Left lung (tissue), 14 donors: ENCODE measurements at regions of chr17 and their contacts with region 1.

Region 1: DNA sequence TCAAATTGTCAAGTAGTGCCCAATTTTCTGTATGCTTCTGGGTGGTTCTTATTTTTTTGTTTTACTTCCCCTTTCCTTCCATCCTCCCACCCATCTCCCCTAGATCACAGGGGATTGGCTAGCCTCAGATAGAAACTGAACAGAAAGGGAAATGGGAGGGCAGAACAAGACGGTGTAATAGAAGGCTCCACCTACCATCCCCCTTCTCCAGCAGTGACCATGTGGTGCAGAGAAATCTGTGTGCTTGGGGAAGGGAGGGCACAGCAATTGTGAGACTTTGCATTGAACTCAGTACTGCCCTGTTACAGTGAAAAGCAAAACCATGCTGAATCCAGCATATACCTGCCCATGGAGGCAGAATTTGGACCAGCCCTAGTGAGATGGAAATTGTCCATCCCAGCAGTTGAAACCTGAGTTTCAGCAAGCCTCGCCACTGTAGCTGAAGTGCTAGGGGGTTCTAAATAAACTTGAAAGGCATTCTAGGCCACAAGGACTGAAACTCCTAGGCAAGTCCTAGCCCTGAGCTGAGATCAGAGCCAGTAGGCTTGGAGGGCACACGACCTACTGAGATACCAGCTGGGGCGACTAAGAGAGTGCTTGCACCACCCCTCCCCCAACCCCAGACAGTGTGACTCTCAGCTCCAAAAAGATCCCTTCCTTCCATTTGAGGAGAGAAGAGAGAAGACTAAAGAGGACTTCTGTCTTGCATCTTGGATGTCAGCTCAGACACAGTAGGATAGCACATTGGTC is 5.2 kb downstream of the SLFN11 start:
- DNase-seq: peak in 1 of 4 donors; percentile 43
- ATAC-seq: peak; percentile 94
- H3K4me3 ChIP-seq: no peak overlapping the region
- H3K27ac ChIP-seq: no peak overlapping the region
- H3K4me1 ChIP-seq: peaks cover 0 to 60% of the 10 kb centered on the region in 2 donors
- H3K27me3 ChIP-seq: peaks cover 0 to 16% of the 10 kb centered on the region in 2 donors
- CTCF ChIP-seq: no peak

Region 2: DNA sequence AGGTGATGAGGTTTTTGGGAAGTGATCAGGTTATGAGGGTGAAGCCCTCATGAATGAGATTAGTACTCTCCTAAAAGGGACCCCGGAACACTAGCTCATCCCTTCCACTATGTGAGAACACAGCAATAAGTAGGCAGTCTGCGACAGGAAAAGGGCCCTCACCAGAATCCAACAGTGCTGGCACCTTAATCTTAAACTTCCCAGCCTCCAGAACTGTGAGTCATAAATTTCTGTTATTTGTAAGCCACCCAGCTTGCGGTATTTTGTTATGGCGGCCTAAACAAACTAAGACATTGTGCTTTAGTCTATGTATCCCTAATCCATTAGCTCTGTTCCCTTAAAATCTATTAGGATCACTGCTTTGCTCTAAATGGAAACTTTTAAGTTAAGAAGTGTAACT is 55.5 kb after region 1 on chr17:
- intact Hi-C with region 1: loop called in 1 of 2 experiments (anchors 10 kb)
- DNase-seq: no peak
- ATAC-seq: no peak
- H3K4me3 ChIP-seq: no peak overlapping the region
- H3K27ac ChIP-seq: no peak overlapping the region
- H3K4me1 ChIP-seq: no peaks in the 10 kb centered on the region
- H3K27me3 ChIP-seq: no peaks in the 10 kb centered on the region
- CTCF ChIP-seq: no peak